Activated B cell treated with CpG ODN at 0.5 μM for 24 hours (primary cell): ENCODE measurements at regions of chr14 and their contacts with region 1.

Region 1: DNA sequence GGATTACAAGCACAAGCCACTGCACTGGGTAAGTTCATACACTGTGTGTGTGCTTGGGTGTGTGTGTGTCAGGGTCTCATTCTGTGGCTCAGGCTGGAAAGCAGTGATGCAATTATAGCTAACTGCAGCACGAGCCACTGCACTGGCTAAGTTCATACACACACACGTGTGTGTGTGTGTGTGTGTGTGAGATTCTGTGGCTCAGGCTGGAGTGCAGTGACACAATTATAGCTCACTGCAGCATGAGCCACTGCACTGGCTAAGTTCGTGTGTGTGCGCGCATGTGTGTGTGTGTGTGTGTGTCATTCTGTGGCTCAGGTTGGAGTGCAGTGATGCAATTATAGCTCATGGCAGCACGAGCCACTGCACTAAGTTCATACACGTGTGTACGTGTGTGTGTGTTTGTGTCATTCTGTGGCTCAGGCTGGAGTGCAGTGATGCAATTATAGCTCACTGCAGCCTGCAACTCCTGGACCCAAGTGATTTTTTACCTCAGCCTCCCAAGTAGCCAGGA is 85.4 kb downstream of the HECTD1 start:
- DNase-seq: no peak
- ATAC-seq: no peak
- H3K4me3 Mint-ChIP-seq: no peak overlapping the region
- H3K27ac Mint-ChIP-seq: no peak overlapping the region
- H3K4me1 Mint-ChIP-seq: no peaks in the 10 kb centered on the region
- H3K27me3 Mint-ChIP-seq: no peaks in the 10 kb centered on the region
- CTCF ChIP-seq: no peak

Region 2: DNA sequence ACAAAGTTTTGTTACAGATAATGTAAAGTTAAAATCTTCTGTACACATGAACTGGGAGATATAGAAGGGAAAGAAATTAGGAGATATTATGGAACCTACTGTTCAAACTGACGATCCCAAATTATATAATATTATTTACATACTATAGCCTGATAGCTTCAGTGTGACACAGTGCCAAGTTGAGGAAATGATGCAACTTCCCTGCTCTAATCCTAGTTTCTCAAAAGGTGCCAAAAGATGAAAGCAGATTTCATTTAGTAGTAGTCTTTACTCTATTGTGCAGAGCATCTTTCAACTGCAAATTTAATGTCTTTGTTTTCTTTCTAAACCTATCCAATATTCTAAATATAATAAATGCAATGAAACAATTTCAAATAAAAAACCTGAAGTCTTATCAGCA is 200.8 kb before region 1 on chr14:
- CTCF ChIA-PET with region 1: no interaction called
- POLR2A ChIA-PET with region 1: no interaction called
- intact Hi-C with region 1: no loop called
- DNase-seq: no peak
- ATAC-seq: no peak
- H3K4me3 Mint-ChIP-seq: no peak overlapping the region
- H3K27ac Mint-ChIP-seq: no peak overlapping the region
- H3K4me1 Mint-ChIP-seq: no peaks in the 10 kb centered on the region
- H3K27me3 Mint-ChIP-seq: no peaks in the 10 kb centered on the region
- CTCF ChIP-seq: no peak

Region 3: DNA sequence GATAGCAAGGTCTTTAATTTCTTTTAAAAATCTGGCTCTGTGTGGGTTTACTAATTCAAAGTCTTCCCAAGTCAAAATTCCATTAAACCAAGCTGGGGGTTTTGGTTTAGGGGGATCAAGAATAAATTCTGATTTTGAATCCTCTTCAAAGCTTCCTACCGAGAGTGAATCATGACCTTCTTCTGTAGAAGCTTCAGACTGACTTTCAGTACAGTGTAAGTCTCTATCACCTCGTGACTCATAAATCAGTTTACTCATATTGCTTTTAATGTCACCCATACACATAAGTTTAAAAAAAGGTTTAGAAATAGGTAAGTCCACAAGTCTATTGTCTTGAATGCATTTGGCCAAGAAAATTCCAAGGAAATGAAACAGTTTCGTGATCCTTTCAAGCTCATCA is 15.4 kb before region 1 on chr14:
- CTCF ChIA-PET with region 1: no interaction called
- POLR2A ChIA-PET with region 1: interaction called, 3 read pairs
- intact Hi-C with region 1: loop called (anchors 1 kb)
- DNase-seq: no peak
- ATAC-seq: no peak
- H3K4me3 Mint-ChIP-seq: no peak overlapping the region
- H3K27ac Mint-ChIP-seq: no peak overlapping the region
- H3K4me1 Mint-ChIP-seq: no peaks in the 10 kb centered on the region
- H3K27me3 Mint-ChIP-seq: no peaks in the 10 kb centered on the region
- CTCF ChIP-seq: no peak

Region 4: DNA sequence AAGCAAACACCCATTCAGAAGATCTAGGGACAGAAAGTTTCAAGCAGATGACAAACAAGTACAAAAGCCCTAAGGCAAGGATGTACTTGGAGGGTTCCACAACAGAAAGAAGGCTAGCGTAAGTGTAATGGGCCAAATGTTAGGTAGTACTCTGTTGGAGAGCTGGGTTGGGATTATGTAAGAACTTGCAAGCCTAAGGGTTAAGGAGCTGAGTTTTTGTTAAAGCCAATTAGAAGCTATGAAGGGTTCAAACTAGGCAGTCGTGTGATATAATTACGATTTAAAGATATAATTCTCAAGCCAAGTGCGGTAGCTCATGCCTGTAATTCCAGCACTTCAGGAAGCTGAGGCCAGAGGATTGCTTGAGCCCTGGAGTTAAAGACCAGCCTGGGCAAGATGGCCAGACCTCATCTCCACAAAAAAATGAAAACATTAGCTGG is 44.1 kb after region 1 on chr14:
- CTCF ChIA-PET with region 1: no interaction called
- POLR2A ChIA-PET with region 1: no interaction called
- intact Hi-C with region 1: no loop called
- DNase-seq: no peak
- ATAC-seq: no peak
- H3K4me3 Mint-ChIP-seq: no peak overlapping the region
- H3K27ac Mint-ChIP-seq: no peak overlapping the region
- H3K4me1 Mint-ChIP-seq: no peaks in the 10 kb centered on the region
- H3K27me3 Mint-ChIP-seq: no peaks in the 10 kb centered on the region
- CTCF ChIP-seq: no peak